Activated naive CD4-positive, alpha-beta T cell treated with anti-CD3 and anti-CD28 coated beads for 36 hours (primary cell): ENCODE measurements at regions of chr12 and their contacts with region 1.

Region 1: DNA sequence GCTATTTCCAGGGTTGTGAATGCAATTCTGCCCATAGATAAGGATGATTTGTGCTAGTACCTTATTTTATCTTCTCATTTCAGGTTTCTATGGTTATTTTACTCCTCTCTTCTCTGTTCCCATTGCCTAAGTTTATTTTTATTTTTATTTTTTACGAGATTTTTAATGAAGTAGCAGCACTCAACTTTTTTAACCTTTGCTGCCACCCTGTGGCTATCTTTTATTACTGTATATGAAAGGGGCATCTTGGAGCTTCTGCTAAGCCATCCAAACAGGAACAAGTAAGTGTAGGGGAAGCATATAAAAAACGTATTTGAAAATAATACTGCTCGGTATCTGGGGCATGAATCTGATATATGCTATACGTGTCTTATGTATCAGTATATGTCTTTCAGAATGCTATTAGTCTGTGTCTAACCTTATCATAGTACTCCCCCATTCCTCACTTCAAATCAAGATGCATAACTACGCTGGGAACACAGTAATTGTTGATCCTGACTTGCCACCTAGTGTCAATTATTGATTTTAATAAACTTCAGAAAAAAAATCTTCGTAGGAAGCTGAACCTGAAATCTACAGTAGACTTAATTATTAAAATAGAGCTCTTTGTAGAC is 60.3 kb downstream of the KLRG1 start:
- DNase-seq: peak; percentile 33
- H3K4me3 Mint-ChIP-seq: no peak overlapping the region
- H3K27ac Mint-ChIP-seq: no peak overlapping the region
- H3K4me1 Mint-ChIP-seq: peaks cover 11% of the 10 kb centered on the region
- H3K27me3 Mint-ChIP-seq: no peaks in the 10 kb centered on the region

Region 2: GRCh38 chr12:8681041-8681902 is 368.4 kb before region 1 on chr12:
- CTCF ChIA-PET with region 1: interaction called, 18 read pairs
- intact Hi-C with region 1: loop called (anchors 1 kb)
- DNase-seq: no peak
- H3K4me3 Mint-ChIP-seq: no peak overlapping the region
- H3K27ac Mint-ChIP-seq: no peak overlapping the region
- H3K4me1 Mint-ChIP-seq: peaks cover 4% of the 10 kb centered on the region
- H3K27me3 Mint-ChIP-seq: no peaks in the 10 kb centered on the region

Region 3: DNA sequence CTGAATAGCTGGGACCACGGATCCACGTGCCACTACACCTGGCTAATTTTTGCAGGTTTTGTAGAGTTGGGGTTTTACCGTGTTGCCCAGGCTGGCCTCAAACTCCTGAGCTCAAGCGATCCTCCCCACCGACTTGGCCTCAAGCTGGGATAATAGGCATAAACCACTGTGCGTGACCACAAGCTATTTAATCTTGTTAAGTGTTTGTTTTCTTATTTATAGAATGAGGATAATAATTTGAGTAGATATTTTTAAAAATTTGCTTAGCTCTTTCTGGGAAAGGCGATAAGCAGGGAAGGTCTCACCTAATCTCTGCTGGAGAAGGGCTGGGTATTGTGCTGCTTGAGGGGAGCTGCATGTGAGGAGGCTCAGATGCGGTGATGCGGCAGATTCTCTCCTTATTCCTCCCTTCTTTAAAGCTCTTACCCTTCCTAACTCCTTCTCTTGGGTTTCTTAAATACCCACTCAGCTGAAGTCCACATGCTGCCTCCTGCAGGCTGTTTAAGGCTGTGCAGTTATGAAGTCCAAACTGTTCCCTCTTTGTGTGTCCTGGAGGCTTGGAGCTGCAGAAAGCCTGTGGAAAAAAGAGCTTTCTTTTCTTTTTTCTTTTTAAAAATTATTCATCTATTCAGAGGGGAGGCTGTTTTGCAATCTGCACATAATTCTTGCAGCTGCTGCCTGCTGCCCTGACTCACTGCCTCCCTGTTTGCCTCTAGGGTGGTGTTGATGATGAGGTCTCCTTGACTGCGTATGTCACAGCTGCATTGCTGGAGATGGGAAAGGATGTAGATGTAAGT is 189.3 kb before region 1 on chr12:
- CTCF ChIA-PET with region 1: interaction called, 18 read pairs
- intact Hi-C with region 1: no loop called
- DNase-seq: peak; percentile 57
- H3K4me3 Mint-ChIP-seq: no peak overlapping the region
- H3K27ac Mint-ChIP-seq: no peak overlapping the region
- H3K4me1 Mint-ChIP-seq: no peaks in the 10 kb centered on the region
- H3K27me3 Mint-ChIP-seq: no peaks in the 10 kb centered on the region

Region 4: GRCh38 chr12:9039397-9039977 is 10.1 kb before region 1 on chr12:
- CTCF ChIA-PET with region 1: interaction called, 29 read pairs
- intact Hi-C with region 1: no loop called
- DNase-seq: no peak
- H3K4me3 Mint-ChIP-seq: no peak overlapping the region
- H3K27ac Mint-ChIP-seq: no peak overlapping the region
- H3K4me1 Mint-ChIP-seq: peaks cover 42% of the 10 kb centered on the region
- H3K27me3 Mint-ChIP-seq: no peaks in the 10 kb centered on the region